Activated CD4-positive, alpha-beta memory T cell treated with anti-CD3 and anti-CD28 coated beads, Interleukin-2, amount 10 ng/mL, durations not matched to agents 7 days and 5 days (primary cell): ENCODE measurements at regions of chr4 and their contacts with region 1.

Region 1: GRCh38 chr4:183444214-183445066 is at the start of gene CDKN2AIP:
- DNase-seq: peak; percentile 94
- H3K4me3 Mint-ChIP-seq: peak within 1 kb of the TSS; percentile 98
- H3K27ac Mint-ChIP-seq: peak within 1 kb of the TSS; percentile 99
- H3K4me1 Mint-ChIP-seq: peaks cover 48% of the 10 kb centered on the region
- H3K27me3 Mint-ChIP-seq: no peaks in the 10 kb centered on the region
- total RNA-seq, gene CDKN2AIP: 30.5 to 30.9 TPM

Region 2: GRCh38 chr4:183398227-183399125 is 46.0 kb before region 1 on chr4:
- CTCF ChIA-PET with region 1: interaction called, 3 read pairs
- POLR2A ChIA-PET with region 1: interaction called, 10 read pairs
- DNase-seq: peak; percentile 72
- H3K4me3 Mint-ChIP-seq: peak overlapping the region; percentile 75
- H3K27ac Mint-ChIP-seq: no peak overlapping the region
- H3K4me1 Mint-ChIP-seq: peaks cover 25% of the 10 kb centered on the region
- H3K27me3 Mint-ChIP-seq: peaks cover 24% of the 10 kb centered on the region

Region 3: GRCh38 chr4:183430317-183430993 is 14.0 kb before region 1 on chr4:
- CTCF ChIA-PET with region 1: interaction called, 12 read pairs
- POLR2A ChIA-PET with region 1: interaction called, 33 read pairs
- DNase-seq: peak; percentile 30
- H3K4me3 Mint-ChIP-seq: no peak overlapping the region
- H3K27ac Mint-ChIP-seq: peak overlapping the region; percentile 59
- H3K4me1 Mint-ChIP-seq: peaks cover 32% of the 10 kb centered on the region
- H3K27me3 Mint-ChIP-seq: no peaks in the 10 kb centered on the region

Region 4: GRCh38 chr4:183492791-183493221 is 48.4 kb after region 1 on chr4:
- CTCF ChIA-PET with region 1: no interaction called
- POLR2A ChIA-PET with region 1: no interaction called
- DNase-seq: no peak
- H3K4me3 Mint-ChIP-seq: no peak overlapping the region
- H3K27ac Mint-ChIP-seq: no peak overlapping the region
- H3K4me1 Mint-ChIP-seq: no peaks in the 10 kb centered on the region
- H3K27me3 Mint-ChIP-seq: no peaks in the 10 kb centered on the region

Region 5: GRCh38 chr4:183504064-183504929 is 59.9 kb after region 1 on chr4:
- CTCF ChIA-PET with region 1: interaction called, 9 read pairs
- POLR2A ChIA-PET with region 1: interaction called, 96 read pairs
- DNase-seq: peak; percentile 99
- H3K4me3 Mint-ChIP-seq: peak overlapping the region; percentile 93
- H3K27ac Mint-ChIP-seq: peak overlapping the region; percentile 93
- H3K4me1 Mint-ChIP-seq: peaks cover 46% of the 10 kb centered on the region
- H3K27me3 Mint-ChIP-seq: no peaks in the 10 kb centered on the region